OCI-LY7 (cell line): ENCODE measurements at regions of chr12 and their contacts with region 1.

Region 1: DNA sequence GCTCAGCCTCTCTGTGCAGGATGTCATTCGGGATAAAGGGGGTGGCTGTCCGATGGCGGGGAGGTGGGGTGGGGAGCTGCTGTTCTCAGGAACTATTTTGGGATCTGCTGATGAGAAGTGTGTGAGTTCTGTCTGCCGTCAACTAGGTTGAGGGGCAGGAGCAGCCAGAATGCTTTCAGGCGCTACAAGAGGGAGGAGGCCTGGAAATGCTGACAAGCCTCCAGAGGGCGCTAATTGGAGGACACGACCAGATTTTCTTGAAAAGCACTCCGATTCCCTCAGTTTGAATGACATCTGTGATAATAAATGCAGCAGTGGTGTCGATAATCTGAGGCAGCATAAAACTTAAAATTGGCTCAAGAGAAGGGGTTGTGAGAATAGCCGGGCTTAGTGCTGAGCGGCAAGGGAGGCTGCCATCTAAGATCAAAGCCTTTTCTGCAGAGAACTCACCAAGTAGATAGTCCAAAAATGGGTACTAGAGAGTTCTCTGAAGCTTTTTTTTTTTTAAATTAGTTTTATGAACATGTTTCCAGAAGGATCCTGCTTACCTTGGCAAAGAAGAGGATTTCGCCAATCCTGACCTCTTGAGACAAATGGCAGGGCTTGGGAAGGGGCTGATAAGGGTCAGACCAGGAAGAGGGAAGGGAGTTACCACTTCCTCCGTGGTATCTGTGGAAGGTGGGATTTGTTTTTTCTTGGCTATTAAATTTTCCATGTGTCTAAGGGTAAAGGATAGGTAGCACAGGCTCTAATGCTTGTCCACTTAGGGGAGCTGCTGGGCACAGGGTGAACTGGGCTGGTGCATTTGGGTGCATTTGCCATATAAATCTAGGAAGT is 94.4 kb downstream of the CRACR2A start:
- DNase-seq: peak; percentile 35
- H3K4me3 ChIP-seq: no peak overlapping the region
- H3K27ac ChIP-seq: no peak overlapping the region
- H3K4me1 ChIP-seq: no peaks in the 10 kb centered on the region
- CTCF ChIP-seq: peak; percentile 80

Region 2: DNA sequence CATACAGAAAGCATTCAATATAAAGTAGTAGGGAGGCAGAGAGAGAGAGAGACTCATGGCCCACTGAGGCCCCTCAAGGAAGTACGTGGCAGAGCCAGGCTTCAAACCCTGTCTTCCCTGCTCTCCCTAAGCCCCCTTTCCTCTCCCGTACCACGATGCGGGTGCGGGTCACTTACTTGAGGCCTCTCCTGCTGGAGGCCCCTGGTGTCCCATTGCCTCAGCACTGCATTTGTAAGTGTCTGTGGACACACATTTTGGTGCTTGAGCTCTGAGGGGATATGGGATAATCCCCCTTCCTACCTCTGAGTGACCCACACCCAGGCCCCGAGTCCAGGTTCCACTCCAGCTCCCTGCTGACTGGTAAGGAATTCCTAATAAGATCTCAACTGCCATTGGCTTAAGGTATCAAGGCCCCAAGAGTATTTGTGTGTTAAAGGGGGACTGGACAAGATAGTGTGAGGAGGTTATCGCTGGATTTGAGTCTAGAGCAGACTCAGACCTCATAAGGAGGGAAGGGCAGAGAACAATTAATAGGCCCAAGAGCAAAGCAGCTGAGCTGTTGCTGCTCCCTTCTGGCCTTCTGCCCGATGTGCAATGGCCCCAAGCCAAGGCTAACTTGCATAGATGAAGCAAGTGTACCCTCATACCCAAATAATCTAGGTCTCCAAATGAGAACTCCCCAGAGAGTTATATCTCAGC is 22.5 kb after region 1 on chr12:
- CTCF ChIA-PET with region 1: no interaction called
- POLR2A ChIA-PET with region 1: no interaction called
- intact Hi-C with region 1: no loop called
- DNase-seq: no peak
- H3K4me3 ChIP-seq: no peak overlapping the region
- H3K27ac ChIP-seq: no peak overlapping the region
- H3K4me1 ChIP-seq: no peaks in the 10 kb centered on the region
- CTCF ChIP-seq: no peak

Region 3: DNA sequence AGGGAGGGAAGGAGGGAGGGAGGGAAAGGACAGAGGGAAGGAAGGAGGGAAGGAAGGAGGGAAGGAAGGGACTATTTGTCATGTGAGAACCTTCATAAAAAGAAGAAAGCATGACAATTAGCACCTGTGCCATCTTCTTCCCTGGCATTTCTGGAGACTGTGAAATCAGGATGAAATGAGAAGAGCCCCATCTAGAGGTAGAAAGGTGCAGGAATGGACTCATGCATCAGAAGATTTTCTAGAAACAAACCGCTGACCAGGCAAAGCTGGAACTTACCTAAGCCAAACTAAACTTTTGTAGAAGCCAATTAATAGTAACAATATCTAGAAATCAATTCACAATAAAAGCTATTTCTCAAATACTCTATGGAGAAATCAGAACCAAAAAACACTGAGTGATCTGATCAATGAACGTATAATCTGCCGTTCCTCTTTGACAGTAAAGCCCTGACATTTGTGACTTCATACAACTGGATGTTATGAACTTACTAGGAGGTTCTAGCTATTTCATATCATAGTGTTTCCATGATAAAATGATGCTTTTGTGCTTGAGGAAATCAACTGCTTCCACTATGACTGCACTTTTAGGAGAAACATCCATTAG is 118.8 kb after region 1 on chr12:
- CTCF ChIA-PET with region 1: no interaction called
- POLR2A ChIA-PET with region 1: no interaction called
- intact Hi-C with region 1: loop called (anchors 1 kb)
- DNase-seq: peak; percentile 50
- H3K4me3 ChIP-seq: no peak overlapping the region
- H3K27ac ChIP-seq: no peak overlapping the region
- H3K4me1 ChIP-seq: no peaks in the 10 kb centered on the region
- CTCF ChIP-seq: peak; percentile 85

Region 4: GRCh38 chr12:3803865-3804472 is 145.4 kb after region 1 on chr12:
- CTCF ChIA-PET with region 1: interaction called, 3 read pairs
- POLR2A ChIA-PET with region 1: no interaction called
- intact Hi-C with region 1: loop called (anchors 10 kb)
- DNase-seq: peak; percentile 74
- H3K4me3 ChIP-seq: no peak overlapping the region
- H3K27ac ChIP-seq: no peak overlapping the region
- H3K4me1 ChIP-seq: no peaks in the 10 kb centered on the region
- CTCF ChIP-seq: peak; percentile 96